Posterior cingulate gyrus (tissue), 11 donors: ENCODE measurements at regions of chr17 and their contacts with region 1.

Region 1: GRCh38 chr17:80866147-80866793 is 125.4 kb upstream of the CHMP6 start:
- DNase-seq: peak in 9 of 10 donors; percentile 56 to 95 (median 76)

Region 2: GRCh38 chr17:80970044-80970761 is 103.9 kb after region 1 on chr17:
- intact Hi-C with region 1: loop called (anchors 2 kb)
- DNase-seq: peak in 9 of 10 donors; percentile 52 to 93 (median 67)